PC-9 (cell line): ENCODE measurements at regions of chr2 and their contacts with region 1.

Region 1: GRCh38 chr2:134988994-134989605 is 58.1 kb downstream of the MAP3K19 start:
- DNase-seq: no peak
- H3K4me3 ChIP-seq: no peak overlapping the region
- H3K27ac ChIP-seq: no peak overlapping the region
- H3K4me1 ChIP-seq: no peaks in the 10 kb centered on the region
- H3K27me3 ChIP-seq: peaks cover 26% of the 10 kb centered on the region
- CTCF ChIP-seq: peak; percentile 73

Region 2: GRCh38 chr2:134460583-134460998 is 528.5 kb before region 1 on chr2:
- CTCF ChIA-PET with region 1: no interaction called
- POLR2A ChIA-PET with region 1: no interaction called
- intact Hi-C with region 1: loop called (anchors 2 kb)
- DNase-seq: peak; percentile 55 to 67
- H3K4me3 ChIP-seq: no peak overlapping the region
- H3K27ac ChIP-seq: no peak overlapping the region
- H3K4me1 ChIP-seq: no peaks in the 10 kb centered on the region
- H3K27me3 ChIP-seq: no peaks in the 10 kb centered on the region
- CTCF ChIP-seq: peak; percentile 81

Region 3: GRCh38 chr2:135709992-135710391 is 720.9 kb after region 1 on chr2:
- CTCF ChIA-PET with region 1: interaction called, 9 read pairs
- POLR2A ChIA-PET with region 1: no interaction called
- intact Hi-C with region 1: loop called (anchors 5 kb)
- DNase-seq: peak in 1 of 2 experiments; percentile 53
- H3K4me3 ChIP-seq: no peak overlapping the region
- H3K27ac ChIP-seq: no peak overlapping the region
- H3K4me1 ChIP-seq: no peaks in the 10 kb centered on the region
- H3K27me3 ChIP-seq: no peaks in the 10 kb centered on the region
- CTCF ChIP-seq: peak; percentile 96

Region 4: DNA sequence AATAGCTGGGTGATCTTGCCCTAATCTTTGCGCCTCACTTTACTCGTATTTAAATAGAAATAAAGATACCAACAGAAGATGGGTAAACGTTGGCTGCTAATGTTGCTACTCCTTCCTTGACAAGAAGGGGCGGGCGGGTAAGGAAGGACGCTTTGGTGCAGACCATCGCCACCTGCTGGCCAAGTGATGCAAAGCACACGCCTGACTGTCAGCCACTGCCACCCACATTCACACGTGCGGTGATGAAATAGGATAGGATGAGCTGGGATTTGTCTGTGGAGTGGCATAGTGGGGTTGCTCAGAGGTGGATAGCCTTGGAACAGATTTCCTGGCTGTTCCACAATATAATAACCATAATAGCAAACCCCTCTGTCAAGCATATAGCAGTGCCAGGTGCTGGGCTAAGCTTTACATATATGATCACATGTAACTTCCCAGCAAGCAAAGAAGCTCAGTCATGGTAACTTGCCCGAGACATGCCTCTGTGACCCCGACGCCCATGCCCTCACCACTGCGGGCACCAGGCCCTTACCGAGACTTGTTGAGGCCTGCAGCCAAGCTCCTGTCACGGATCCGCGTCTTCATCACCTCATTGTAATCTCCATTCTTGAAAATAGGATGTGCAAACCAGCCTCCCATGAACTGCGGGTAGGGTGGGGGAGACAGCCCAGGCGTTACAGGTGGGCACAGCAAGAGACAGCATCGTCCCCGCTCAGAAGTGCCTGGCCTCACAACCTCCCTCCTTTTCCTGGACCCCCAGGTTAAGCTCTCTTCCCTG is 808.6 kb after region 1 on chr2:
- CTCF ChIA-PET with region 1: interaction called, 3 read pairs
- POLR2A ChIA-PET with region 1: no interaction called
- intact Hi-C with region 1: loop called (anchors 5 kb)
- DNase-seq: peak; percentile 48 to 57
- H3K4me3 ChIP-seq: no peak overlapping the region
- H3K27ac ChIP-seq: no peak overlapping the region
- H3K4me1 ChIP-seq: no peaks in the 10 kb centered on the region
- H3K27me3 ChIP-seq: no peaks in the 10 kb centered on the region
- CTCF ChIP-seq: peak; percentile 92

Region 5: DNA sequence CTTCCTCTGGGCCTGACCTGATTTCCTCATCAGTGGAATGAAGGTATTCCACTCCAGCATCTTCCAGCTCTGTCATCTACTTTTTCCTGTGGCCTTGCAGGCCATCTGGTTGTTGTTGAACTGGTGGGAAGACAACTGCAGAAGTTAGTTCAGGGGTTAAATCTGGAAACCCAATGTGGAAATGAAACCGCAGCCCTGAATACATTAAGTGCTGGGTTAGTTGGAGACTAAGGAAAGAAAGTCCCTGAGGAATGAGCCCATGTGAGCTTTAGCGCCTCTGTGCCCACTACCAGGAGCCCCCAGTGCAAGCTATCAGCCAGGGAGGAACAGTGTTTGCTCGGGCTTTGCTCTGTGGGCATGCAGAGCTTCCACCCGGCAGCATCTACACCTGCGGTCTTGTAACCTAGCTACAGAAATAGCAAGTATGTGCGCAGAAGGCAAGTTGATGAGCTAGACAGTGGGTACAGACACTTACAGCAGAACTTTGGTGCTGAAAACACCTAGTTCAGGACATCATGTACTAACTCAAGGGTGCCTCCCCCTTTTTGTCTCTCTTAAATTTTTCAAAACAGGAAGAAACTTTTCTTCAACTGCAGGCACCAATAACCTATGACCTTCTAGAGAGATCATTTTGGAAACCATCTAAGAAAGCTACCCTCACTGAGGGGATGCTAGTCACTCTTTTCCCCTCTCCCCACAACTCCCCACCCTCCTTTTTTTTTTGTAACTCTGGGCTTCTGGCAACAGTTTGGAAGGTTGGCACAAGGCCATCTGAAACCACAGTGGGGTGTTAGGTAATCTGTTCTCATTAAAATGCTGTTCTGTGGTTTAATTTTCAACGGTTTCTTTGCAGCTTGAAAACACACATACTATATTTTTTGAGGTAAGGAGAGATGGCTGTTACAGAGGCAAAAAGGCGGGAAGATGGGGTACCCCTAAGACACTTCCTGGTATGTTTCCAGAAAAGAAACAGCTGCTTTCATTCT is 1147.1 kb after region 1 on chr2:
- CTCF ChIA-PET with region 1: no interaction called
- POLR2A ChIA-PET with region 1: interaction called, 10 read pairs
- intact Hi-C with region 1: no loop called
- DNase-seq: no peak
- H3K4me3 ChIP-seq: no peak overlapping the region
- H3K27ac ChIP-seq: peak overlapping the region; percentile 78
- H3K4me1 ChIP-seq: peaks cover 36% of the 10 kb centered on the region
- H3K27me3 ChIP-seq: no peaks in the 10 kb centered on the region
- CTCF ChIP-seq: no peak